Heart right ventricle (tissue), 16 donors: ENCODE measurements at regions of chr3 and their contacts with region 1.

Region 1: DNA sequence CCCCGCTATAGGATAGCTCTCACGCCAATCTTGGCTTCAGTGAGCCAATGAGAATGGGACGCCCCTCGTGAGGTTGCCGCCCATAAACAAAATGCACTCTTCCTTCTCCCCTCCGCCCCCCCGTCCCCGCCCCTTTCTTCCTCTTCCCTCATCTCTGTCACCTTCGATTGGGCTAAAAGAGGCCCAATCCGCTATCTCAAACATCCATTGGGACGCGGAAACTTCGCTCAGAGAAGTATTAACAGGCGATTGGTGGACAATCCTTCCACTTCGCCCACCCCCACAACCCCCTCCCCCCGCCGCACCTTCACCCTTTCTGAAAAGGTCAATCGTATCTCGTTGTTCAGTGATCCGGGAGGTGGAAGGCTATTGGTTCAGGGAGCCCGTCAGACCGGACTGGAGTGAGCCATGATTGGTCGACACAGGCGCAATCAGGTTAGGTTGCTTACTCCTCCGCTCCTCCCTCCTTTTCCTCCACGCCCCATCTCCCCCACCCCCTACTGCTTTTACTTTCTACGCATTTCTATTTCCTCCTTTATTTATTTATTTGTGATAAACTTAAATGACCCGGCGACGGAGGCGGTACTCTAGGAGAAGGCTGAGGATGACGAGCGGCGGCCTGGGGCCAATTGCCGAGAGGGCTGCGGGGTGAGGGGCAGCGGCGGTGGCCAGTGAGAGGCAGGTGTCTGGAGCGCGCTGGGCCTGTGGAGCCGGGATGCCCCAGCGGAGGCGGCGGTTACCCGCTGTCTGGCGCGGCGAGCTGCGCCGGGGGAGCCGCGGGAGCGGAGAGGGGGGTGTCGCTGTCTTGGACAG is 447 bp upstream of the ZBTB20 start:
- DNase-seq: peak; percentile 98 to 100
- ATAC-seq: peak; percentile 88 to 96 (median 93)
- H3K4me3 ChIP-seq: peak overlapping the region; percentile 61 to 94 (median 86)
- H3K27ac ChIP-seq: peak overlapping the region; percentile 94 to 99 (median 97)
- H3K4me1 ChIP-seq: peaks cover 0 to 26% (median 16%) of the 10 kb centered on the region in 9 donors
- H3K27me3 ChIP-seq: no peaks in the 10 kb centered on the region
- CTCF ChIP-seq: peak in 2 of 9 donors; percentile 17 to 22

Region 2: GRCh38 chr3:115099986-115100571 is 47.5 kb before region 1 on chr3:
- intact Hi-C with region 1: loop called in 6 of 10 experiments (anchors 2 to 5 kb)
- DNase-seq: peak in 1 of 2 donors; percentile 41
- ATAC-seq: peak; percentile 75 to 93 (median 90)
- H3K4me3 ChIP-seq: peak overlapping the region; percentile 13 to 56 (median 48)
- H3K27ac ChIP-seq: peak overlapping the region; percentile 27 to 82 (median 73)
- H3K4me1 ChIP-seq: peaks cover 4 to 66% (median 37%) of the 10 kb centered on the region in 9 donors
- H3K27me3 ChIP-seq: no peaks in the 10 kb centered on the region
- CTCF ChIP-seq: no peak

Region 3: DNA sequence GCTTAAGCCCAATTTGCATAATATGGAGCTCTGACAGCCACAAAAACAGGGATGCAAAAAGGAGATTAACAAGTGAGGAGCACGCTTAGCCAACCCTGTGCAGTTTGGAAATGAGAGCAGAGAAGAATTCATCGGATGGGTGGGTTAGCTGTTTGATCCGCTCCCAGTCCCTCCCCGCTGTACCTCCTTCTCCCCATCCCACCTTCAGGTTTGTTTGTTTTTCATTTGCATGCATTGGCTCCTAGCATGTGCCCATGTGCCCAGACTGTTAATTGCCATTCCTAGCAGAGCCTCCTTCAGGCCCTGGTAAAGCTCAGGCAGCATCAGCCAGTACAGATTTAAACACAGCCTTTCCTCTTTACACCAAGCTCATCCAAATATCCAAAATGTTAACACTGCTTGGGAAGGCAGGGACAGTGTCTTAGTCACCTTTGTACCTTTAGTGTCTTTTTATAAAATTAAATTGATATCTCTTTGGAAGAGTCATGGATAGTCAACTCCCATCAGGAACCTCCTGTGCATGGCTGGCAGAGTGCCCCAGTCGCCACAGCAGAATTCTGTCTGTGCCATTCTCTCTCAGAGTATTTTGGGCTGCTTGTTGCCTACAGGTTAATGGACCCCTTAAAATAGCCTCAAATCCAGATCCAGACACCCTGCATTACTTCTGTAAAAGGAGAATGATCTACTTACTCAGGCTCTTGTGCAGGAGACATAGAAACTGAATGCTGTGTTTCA is 1053.6 kb after region 1 on chr3:
- intact Hi-C with region 1: no loop called
- DNase-seq: no peak
- ATAC-seq: no peak
- H3K4me3 ChIP-seq: no peak overlapping the region
- H3K27ac ChIP-seq: no peak overlapping the region
- H3K4me1 ChIP-seq: no peaks in the 10 kb centered on the region
- H3K27me3 ChIP-seq: no peaks in the 10 kb centered on the region
- CTCF ChIP-seq: no peak